Stomach (tissue), 19 donors: ENCODE measurements at regions of chr1 and their contacts with region 1.

Region 1: DNA sequence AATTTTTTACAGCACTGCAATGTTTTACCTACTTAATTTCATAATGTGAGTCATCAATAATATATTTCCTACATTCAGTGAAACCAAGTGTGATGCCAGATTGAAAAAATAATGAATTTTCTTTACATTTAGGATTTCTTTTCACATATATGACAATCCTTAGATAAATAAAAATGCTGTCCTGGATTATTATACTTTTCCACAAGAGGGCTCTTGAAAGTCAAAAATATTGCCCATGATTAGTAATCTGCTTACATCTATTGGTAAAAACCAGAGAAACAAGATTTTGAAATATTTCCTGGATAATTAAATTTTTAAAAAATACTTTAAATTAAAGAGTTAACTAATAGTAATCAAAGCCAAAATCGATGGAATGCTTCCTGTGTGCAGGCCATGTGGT is 86.8 kb upstream of the PLPPR4 start:
- DNase-seq: no peak
- H3K4me3 ChIP-seq: no peak overlapping the region
- H3K27ac ChIP-seq: no peak overlapping the region
- H3K4me1 ChIP-seq: peaks cover 0 to 9% (median 0%) of the 10 kb centered on the region in 4 donors
- H3K27me3 ChIP-seq: no peaks in the 10 kb centered on the region
- CTCF ChIP-seq: no peak
- EP300 ChIP-seq: no peak
- POLR2A ChIP-seq: no peak

Region 2: DNA sequence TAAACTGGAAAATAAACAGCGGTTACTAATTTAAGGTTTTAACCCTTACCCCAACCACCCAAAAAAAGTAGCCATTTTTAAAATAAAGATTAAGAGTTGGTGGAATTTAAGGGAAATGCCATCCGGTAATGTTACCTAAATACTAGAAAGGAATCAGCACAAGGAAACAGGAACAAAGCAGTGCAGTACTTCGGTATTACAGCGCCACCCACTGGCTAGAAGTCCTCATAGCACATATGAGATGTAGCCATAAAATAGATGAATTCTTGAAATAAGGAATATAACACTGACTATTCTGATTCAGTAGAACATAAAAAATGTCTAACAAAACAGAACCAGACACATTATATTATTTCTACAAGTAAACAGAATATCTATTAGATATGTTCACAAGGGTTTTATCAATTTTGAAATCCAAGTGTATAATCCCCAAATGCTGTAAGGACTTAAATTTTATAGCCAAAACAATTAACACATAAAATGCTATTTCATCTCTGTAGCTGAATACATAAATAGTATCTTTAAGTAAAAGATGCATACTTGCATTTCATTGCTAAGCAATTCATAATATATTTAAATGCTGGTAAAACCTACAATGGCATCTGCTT is 530.2 kb after region 1 on chr1:
- intact Hi-C with region 1: loop called (anchors 5 kb)
- DNase-seq: peak; percentile 77 to 86
- H3K4me3 ChIP-seq: no peak overlapping the region
- H3K27ac ChIP-seq: no peak overlapping the region
- H3K4me1 ChIP-seq: peaks cover 0 to 7% (median 2%) of the 10 kb centered on the region in 4 donors
- H3K27me3 ChIP-seq: no peaks in the 10 kb centered on the region
- CTCF ChIP-seq: peak in 5 of 7 experiments; percentile 45 to 79 (median 62)
- EP300 ChIP-seq: no peak
- POLR2A ChIP-seq: no peak

Region 3: DNA sequence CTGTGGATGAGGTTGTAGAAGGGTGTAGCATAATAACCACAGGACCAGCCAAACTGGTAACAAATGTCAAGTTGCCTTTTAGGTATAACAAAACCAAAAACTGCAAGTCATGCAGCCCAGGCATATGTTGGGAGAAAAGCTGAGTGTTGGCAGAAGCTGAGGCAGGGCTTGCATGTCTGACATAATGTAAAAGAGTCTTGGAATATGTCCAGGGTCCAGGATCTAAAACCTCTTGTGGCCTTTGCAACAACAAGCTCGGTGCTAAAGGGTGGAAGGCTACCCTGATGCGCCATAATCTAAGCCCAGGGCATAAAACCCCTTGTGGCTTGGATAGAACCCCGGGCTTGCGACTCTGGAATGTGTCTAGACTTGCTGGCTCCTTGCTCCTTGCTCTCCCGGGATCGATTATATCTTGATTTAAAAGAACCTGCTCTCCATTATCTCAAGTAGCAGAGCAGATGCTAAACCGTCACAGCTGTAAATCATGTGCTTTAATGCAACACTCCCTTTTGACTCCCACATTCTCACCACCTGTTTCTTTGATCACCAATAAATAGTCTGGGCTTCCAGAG is 765.8 kb after region 1 on chr1:
- intact Hi-C with region 1: no loop called
- DNase-seq: peak in 1 of 2 donors; percentile 8
- H3K4me3 ChIP-seq: no peak overlapping the region
- H3K27ac ChIP-seq: no peak overlapping the region
- H3K4me1 ChIP-seq: peaks cover 0 to 8% (median 0%) of the 10 kb centered on the region in 4 donors
- H3K27me3 ChIP-seq: no peaks in the 10 kb centered on the region
- CTCF ChIP-seq: no peak
- EP300 ChIP-seq: no peak
- POLR2A ChIP-seq: no peak